ENCODE measurements at regions of chr14 and their contacts with region 1.

Region 1: GRCh38 chr14:97924922-97925613 is 1127.9 kb downstream of the VRK1 start:
- DNase-seq: no peak
- ATAC-seq: no peak
- H3K4me3 ChIP-seq: no peak overlapping the region
- H3K27ac ChIP-seq: no peak overlapping the region
- H3K4me1 ChIP-seq: no peaks in the 10 kb centered on the region
- H3K27me3 ChIP-seq: no peaks in the 10 kb centered on the region
- CTCF ChIP-seq: no peak
- POLR2A ChIP-seq: no peak

Region 2: GRCh38 chr14:97346675-97347074 is 578.4 kb before region 1 on chr14:
- intact Hi-C with region 1: loop called in 1 of 10 experiments (anchors 10 kb)
- DNase-seq: no peak
- ATAC-seq: no peak
- H3K4me3 ChIP-seq: no peak overlapping the region
- H3K27ac ChIP-seq: no peak overlapping the region
- H3K4me1 ChIP-seq: no peaks in the 10 kb centered on the region
- H3K27me3 ChIP-seq: peaks cover 0 to 5% (median 0%) of the 10 kb centered on the region in 9 donors
- CTCF ChIP-seq: no peak
- POLR2A ChIP-seq: no peak

Region 3: DNA sequence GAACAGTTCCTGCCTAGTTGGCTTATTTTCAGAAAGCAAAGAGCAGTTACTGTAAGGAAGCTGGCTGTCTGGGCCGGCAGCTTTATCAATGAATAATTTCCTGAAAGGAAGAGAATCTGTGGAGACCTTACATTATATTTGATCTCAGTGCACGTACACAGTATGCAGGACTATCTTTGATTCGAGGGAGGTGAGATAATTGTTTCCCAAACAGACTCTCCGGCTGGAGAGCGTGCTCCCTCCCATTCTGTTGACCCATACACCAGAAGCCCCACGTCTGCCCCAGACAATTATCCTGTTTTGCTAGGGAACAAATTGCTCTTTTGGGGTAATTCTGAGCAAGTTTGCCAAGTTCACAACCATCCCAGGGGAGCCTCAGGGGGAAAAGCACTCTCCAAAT is 12.9 kb before region 1 on chr14:
- intact Hi-C with region 1: no loop called
- DNase-seq: no peak
- ATAC-seq: no peak
- H3K4me3 ChIP-seq: no peak overlapping the region
- H3K27ac ChIP-seq: no peak overlapping the region
- H3K4me1 ChIP-seq: no peaks in the 10 kb centered on the region
- H3K27me3 ChIP-seq: peaks cover 0 to 4% (median 0%) of the 10 kb centered on the region in 9 donors
- CTCF ChIP-seq: no peak
- POLR2A ChIP-seq: no peak

Region 4: DNA sequence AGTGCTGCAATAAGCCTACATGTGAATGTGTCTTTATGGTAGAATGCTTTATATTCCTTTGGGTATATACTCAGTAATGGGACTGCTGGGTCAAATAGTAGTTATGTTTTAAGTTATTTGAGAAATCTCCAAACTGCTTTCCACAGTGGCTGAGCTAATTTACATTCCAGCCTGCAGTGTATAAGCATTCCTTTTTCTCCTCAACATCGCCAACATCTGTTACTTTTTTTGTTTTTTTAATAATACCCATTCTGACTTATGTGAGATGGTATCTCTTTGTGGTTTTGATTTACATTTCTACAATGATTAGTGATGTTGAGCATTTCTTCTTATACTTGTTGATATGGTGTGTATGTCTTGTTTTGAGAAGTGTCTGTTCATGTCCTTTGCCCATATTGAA is 160.7 kb after region 1 on chr14:
- intact Hi-C with region 1: no loop called
- DNase-seq: no peak
- ATAC-seq: no peak
- H3K4me3 ChIP-seq: no peak overlapping the region
- H3K27ac ChIP-seq: no peak overlapping the region
- H3K4me1 ChIP-seq: no peaks in the 10 kb centered on the region
- H3K27me3 ChIP-seq: peaks cover 0 to 4% (median 0%) of the 10 kb centered on the region in 9 donors
- CTCF ChIP-seq: no peak
- POLR2A ChIP-seq: no peak

Measured in heart left ventricle (tissue), 16 donors.